GM23248 (cell line): ENCODE measurements at regions of chr14 and their contacts with region 1.

Region 1: DNA sequence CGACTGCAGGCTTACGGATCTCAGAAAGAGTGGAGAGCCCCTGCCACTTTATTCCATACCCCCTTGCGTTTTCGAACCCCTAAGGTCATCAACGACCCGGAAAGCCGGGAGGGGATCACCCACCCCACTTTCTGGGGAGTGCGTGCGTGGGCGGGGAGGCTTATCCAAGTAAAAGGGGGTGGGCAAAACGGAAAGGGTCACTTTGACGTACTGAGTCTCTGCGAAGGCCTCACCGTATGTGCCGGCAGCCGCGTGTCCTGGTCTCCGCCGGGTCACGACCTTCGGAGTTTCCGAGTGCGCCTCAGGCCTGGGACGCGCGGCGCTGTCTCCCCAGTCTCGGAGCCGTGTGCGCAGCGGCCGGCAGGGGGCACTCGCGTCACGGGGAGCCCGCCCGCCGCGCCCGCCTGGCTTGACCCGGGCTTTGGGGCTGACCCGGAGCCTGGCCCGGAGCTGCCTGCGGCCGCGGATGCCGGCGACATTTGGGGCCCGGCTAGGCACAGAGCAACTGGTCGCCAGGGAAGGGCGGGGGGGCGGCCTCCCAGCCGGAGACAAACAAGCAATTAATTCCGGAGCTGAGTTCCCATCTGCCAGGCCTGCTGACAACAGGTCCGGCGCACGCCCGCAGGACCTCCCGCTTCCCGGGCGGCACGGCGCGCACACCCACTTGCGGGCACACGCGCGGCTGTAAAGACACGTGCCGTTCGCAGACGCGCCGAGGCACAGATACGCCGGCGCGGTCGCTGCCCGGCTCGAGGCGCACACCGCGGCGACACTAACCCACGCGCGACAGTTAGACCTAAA is 890 bp upstream of the KIF26A start:
- DNase-seq: peak; percentile 64
- H3K4me3 ChIP-seq: peak overlapping the region; percentile 25; the same call in 1 of the 2 replicates
- H3K27ac ChIP-seq: no peak overlapping the region
- H3K4me1 ChIP-seq: no peaks in the 10 kb centered on the region
- H3K27me3 ChIP-seq: peaks cover 10% of the 10 kb centered on the region; the same call in 1 of the 2 replicates

Region 2: DNA sequence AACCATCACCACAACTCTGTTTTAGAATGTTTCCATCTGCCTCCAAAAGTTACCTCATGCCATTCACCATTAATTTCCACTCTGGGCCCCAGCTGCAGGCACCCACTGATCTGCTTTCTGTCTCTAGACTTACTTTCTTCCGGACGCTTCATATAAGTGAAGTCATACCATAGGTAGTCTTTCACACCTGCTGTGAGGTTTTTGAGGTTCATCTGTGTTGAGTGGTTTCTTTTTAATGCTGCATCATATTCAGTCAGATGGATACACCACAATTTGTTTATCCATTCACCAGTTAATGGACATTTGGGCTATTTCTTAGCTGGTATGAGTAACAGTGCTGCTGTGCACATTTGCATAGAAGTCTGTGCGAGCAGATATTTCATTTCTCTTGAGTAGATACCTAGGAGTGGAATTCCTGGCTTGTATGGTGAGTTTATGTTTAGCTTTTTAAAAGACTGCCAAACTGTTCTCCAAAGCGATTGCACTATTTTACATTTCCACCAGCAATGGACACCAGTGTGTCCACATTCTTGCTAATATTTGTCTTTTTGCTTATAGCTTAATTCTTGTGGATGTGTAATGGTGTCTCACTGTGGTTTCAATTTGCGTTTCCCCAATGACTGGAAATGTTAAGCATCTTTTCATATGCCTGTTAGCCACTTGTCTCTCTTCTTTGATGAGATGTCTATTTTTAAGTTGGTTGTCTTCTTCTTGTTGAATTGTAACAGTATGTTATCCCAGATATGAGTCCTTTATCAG is 373.6 kb before region 1 on chr14:
- in situ Hi-C with region 1: no loop called
- DNase-seq: no peak
- H3K4me3 ChIP-seq: no peak overlapping the region
- H3K27ac ChIP-seq: no peak overlapping the region
- H3K4me1 ChIP-seq: no peaks in the 10 kb centered on the region
- H3K27me3 ChIP-seq: no peaks in the 10 kb centered on the region

Region 3: DNA sequence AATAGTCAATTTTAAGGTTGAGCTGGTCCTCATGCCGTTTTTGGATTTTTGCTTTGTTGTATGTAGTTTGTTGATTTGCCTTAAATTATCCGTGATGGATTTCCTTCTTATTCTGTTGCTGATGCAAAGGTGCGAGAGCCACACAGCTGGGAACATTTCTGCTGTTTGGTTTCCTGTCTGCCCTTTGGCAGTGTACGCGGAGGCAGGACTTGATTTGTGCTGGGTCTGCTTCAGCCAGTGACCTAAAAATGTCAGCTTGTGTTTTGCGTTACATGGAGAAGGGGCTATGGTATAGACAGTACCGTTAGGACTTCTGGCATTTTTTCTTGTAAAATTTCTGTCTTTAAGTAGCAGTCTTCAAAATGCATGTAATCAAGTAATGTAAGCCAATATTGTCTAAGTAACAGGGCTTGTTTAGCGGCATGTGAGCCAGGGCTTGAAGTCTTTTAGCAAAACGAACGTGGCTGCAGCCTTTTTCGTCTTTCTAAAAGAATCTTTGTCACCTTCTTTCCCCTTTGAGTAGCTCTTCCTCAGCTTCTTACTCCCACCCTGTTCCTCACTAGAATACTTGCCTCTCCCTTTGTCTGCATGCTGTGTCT is 176.9 kb before region 1 on chr14:
- in situ Hi-C with region 1: no loop called
- DNase-seq: no peak
- H3K4me3 ChIP-seq: no peak overlapping the region
- H3K27ac ChIP-seq: no peak overlapping the region
- H3K4me1 ChIP-seq: no peaks in the 10 kb centered on the region
- H3K27me3 ChIP-seq: peaks cover 4% of the 10 kb centered on the region; the same call in 1 of the 2 replicates

Region 4: GRCh38 chr14:104011824-104012468 is 125.6 kb before region 1 on chr14:
- in situ Hi-C with region 1: no loop called
- DNase-seq: no peak
- H3K4me3 ChIP-seq: no peak overlapping the region
- H3K27ac ChIP-seq: no peak overlapping the region
- H3K4me1 ChIP-seq: no peaks in the 10 kb centered on the region
- H3K27me3 ChIP-seq: peaks cover 24% of the 10 kb centered on the region

Region 5: DNA sequence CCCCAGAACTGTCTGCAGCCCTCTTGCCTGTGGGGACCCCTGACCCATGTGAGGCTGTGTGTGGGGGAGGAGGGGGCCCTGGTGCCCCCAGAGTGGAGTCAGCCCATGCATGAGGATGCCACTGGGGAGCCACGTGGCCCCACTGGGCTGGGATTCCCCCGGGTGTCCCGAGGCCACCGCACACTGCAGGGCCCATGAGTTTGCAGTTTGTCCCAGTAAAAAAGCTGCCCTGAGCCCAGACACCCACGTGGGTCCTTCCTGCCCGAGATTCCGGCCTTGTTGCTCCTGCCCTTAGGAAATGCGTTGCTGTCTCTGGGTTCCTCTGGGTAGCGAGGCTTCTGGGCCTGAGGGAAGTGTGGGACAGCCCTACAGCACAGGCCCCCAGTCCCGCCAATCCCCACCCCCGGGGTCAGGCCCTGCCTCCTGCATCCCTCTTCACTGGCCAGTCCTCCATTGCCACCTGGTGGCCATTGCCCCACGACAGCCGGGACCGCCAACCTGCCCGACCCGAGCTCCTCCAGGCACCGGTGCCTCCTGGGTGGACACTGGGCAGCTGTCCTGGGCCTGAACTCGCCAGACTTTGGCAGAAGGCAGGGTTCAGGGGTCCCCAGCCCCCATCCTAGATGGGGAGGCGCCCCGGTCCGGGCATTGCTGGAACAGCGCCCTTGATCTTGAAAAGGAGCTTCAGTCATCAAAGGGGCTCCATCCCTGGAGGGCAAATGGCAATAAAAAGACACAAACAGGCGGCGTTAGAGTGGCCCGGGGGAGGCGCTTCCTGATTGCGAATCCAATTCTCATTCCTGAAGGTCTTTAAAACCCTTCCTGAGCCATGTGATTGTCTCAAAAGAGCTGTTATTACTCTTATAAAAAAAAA is 426.5 kb after region 1 on chr14:
- in situ Hi-C with region 1: loop called (anchors 10 kb)
- DNase-seq: peak; percentile 63
- H3K4me3 ChIP-seq: no peak overlapping the region
- H3K27ac ChIP-seq: no peak overlapping the region
- H3K4me1 ChIP-seq: no peaks in the 10 kb centered on the region
- H3K27me3 ChIP-seq: peaks cover 13% of the 10 kb centered on the region

Region 6: GRCh38 chr14:104639889-104640548 is 502.5 kb after region 1 on chr14:
- in situ Hi-C with region 1: loop called (anchors 10 kb)
- DNase-seq: peak; percentile 77
- H3K4me3 ChIP-seq: no peak overlapping the region
- H3K27ac ChIP-seq: no peak overlapping the region
- H3K4me1 ChIP-seq: no peaks in the 10 kb centered on the region
- H3K27me3 ChIP-seq: peaks cover 34% of the 10 kb centered on the region

Region 7: DNA sequence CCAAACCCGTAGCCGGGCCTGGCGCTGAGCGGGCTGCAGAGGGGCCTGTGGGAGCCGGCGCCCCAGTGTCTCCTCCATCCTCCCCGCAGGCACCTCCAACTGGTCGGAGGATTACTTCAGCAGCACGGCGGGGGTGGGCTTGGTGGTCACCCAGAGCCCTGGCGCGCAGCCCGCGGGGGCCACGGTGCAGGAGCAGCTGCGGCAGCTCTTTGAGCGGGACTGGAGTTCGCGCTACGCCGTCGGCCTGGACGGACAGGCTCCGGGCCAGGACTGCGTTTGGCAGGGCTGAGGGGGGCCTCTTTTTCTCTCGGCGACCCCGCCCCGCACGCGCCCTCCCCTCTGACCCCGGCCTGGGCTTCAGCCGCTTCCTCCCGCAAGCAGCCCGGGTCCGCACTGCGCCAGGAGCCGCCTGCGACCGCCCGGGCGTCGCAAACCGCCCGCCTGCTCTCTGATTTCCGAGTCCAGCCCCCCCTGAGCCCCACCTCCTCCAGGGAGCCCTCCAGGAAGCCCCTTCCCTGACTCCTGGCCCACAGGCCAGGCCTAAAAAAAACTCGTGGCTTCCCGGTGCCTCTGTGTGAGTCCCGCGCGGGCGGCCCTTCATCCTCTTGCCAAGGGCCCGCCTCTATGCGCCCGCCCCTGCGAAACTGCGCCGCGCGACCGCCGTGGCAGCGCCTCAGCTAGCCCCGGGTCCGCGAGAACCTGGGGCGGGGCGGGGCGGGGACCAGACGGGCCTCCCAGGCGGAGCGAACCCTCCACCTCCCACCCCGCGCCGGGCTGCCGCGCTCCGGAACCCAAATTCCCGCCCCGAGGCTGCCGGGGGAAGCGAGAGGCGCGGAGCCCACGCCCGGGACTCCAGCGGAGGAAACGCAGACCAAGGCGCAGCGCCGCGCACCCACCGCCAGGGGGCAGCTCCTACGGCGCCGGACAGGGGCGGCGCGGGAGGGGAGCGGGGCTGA is 795.5 kb after region 1 on chr14:
- in situ Hi-C with region 1: no loop called
- DNase-seq: peak; percentile 91
- H3K4me3 ChIP-seq: peak overlapping the region; percentile 72
- H3K27ac ChIP-seq: no peak overlapping the region
- H3K4me1 ChIP-seq: no peaks in the 10 kb centered on the region
- H3K27me3 ChIP-seq: no peaks in the 10 kb centered on the region